Endothelial cell of umbilical vein (primary cell): ENCODE measurements at regions of chr3 and their contacts with region 1.

Region 1: DNA sequence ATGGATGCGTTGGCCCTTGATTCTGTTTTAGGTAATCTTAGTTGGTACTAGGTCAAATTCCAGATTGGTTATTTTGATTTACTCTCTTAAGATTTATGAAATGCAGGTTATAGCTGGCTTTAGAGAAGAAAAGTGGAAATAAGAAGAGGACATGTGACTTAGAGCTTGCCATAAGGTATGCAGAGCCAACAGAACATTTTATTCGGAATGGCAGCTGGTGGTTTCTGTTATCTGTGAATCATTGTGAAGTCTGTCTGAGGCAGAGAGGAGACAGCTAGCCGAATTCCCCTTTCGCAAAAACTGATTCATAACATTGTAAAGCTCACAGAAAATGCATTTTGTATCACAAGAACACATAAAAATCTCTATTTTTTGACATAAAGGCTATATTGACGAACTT is 82.1 kb downstream of the FILIP1L start:
- DNase-seq: no peak
- H3K4me3 ChIP-seq: no peak overlapping the region
- H3K27ac ChIP-seq: no peak overlapping the region
- H3K4me1 ChIP-seq: peaks cover 3% of the 10 kb centered on the region
- H3K27me3 ChIP-seq: no peaks in the 10 kb centered on the region
- CTCF ChIP-seq: no peak
- POLR2A ChIP-seq: no peak

Region 2: DNA sequence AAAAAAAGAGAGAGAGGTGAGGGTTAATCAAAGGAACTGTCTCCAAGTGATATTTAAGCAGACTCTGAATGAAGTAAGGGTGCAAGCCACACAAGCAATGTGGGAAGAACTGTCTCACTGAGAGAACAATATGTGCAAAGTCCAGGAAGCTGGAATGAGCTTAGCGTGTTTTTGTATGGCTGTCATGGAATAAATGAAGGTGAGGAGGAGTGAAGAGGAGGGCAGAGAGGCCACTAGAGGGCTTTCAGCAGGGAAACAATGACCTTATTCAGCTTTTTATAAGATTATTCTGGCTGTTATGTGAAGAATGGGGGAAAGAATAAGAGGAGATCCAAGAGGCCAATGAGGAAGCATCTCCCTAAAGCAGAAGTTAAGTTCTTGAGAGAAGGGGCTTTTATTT is 480.7 kb before region 1 on chr3:
- CTCF ChIA-PET with region 1: no interaction called
- POLR2A ChIA-PET with region 1: no interaction called
- dilution Hi-C with region 1: no loop called
- intact Hi-C with region 1: no loop called
- DNase-seq: no peak
- H3K4me3 ChIP-seq: no peak overlapping the region
- H3K27ac ChIP-seq: no peak overlapping the region
- H3K4me1 ChIP-seq: peaks cover 39% of the 10 kb centered on the region
- H3K27me3 ChIP-seq: no peaks in the 10 kb centered on the region
- CTCF ChIP-seq: peak in 1 of 2 donors; percentile 4
- POLR2A ChIP-seq: no peak

Region 3: GRCh38 chr3:99909714-99910494 is 122.3 kb before region 1 on chr3:
- CTCF ChIA-PET with region 1: no interaction called
- POLR2A ChIA-PET with region 1: no interaction called
- dilution Hi-C with region 1: no loop called
- intact Hi-C with region 1: no loop called
- DNase-seq: peak; percentile 61
- H3K4me3 ChIP-seq: no peak overlapping the region
- H3K27ac ChIP-seq: peak overlapping the region; percentile 42
- H3K4me1 ChIP-seq: peaks cover 15% of the 10 kb centered on the region
- H3K27me3 ChIP-seq: no peaks in the 10 kb centered on the region
- CTCF ChIP-seq: no peak
- POLR2A ChIP-seq: no peak

Region 4: GRCh38 chr3:100019719-100020118 is 12.5 kb before region 1 on chr3:
- CTCF ChIA-PET with region 1: interaction called, 13 read pairs
- POLR2A ChIA-PET with region 1: no interaction called
- dilution Hi-C with region 1: no loop called
- intact Hi-C with region 1: no loop called
- DNase-seq: no peak
- H3K4me3 ChIP-seq: no peak overlapping the region
- H3K27ac ChIP-seq: no peak overlapping the region
- H3K4me1 ChIP-seq: no peaks in the 10 kb centered on the region
- H3K27me3 ChIP-seq: no peaks in the 10 kb centered on the region
- CTCF ChIP-seq: no peak
- POLR2A ChIP-seq: no peak